Activated CD4-positive, alpha-beta T cell treated with anti-CD3 and anti-CD28 coated beads for 36 hours (primary cell): ENCODE measurements at regions of chr3 and their contacts with region 1.

Region 1: GRCh38 chr3:32238453-32239306 is at the start of gene CMTM8:
- DNase-seq: peak; percentile 84
- ATAC-seq: peak; percentile 86
- H3K4me3 Mint-ChIP-seq: peak within 1 kb of the TSS; percentile 82
- H3K27ac Mint-ChIP-seq: peak within 1 kb of the TSS; percentile 45
- H3K4me1 Mint-ChIP-seq: peaks cover 27% of the 10 kb centered on the region
- H3K27me3 Mint-ChIP-seq: peaks cover 8% of the 10 kb centered on the region
- total RNA-seq, gene CMTM8: 8.1 to 9.3 TPM

Region 2: GRCh38 chr3:32249184-32249782 is 10.6 kb after region 1 on chr3:
- CTCF ChIA-PET with region 1: interaction called, 17 read pairs
- POLR2A ChIA-PET with region 1: no interaction called
- intact Hi-C with region 1: no loop called
- DNase-seq: no peak
- ATAC-seq: no peak
- H3K4me3 Mint-ChIP-seq: no peak overlapping the region
- H3K27ac Mint-ChIP-seq: no peak overlapping the region
- H3K4me1 Mint-ChIP-seq: peaks cover 32% of the 10 kb centered on the region
- H3K27me3 Mint-ChIP-seq: no peaks in the 10 kb centered on the region

Region 3: DNA sequence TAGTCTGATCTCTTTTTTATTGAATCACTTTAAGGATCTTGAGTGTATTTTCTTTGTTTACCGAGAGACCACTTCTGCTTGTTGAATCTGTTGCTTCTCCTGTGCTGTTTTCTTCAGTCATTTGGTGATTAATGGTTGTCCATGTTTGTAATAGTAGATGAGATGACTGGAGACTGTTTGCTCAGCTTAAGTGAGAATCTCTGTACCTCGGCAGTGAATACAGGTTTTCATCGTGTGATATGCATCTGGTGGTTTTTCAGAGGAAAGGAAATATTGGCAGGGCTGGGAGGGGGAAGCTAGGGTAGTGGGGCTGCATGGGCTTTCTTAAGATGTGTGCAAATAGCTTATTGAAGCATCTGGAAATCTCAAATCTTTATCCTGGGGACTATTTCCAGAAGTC is 19.0 kb after region 1 on chr3:
- CTCF ChIA-PET with region 1: interaction called, 17 read pairs
- POLR2A ChIA-PET with region 1: no interaction called
- intact Hi-C with region 1: no loop called
- DNase-seq: no peak
- ATAC-seq: no peak
- H3K4me3 Mint-ChIP-seq: no peak overlapping the region
- H3K27ac Mint-ChIP-seq: no peak overlapping the region
- H3K4me1 Mint-ChIP-seq: peaks cover 16% of the 10 kb centered on the region
- H3K27me3 Mint-ChIP-seq: no peaks in the 10 kb centered on the region

Region 4: DNA sequence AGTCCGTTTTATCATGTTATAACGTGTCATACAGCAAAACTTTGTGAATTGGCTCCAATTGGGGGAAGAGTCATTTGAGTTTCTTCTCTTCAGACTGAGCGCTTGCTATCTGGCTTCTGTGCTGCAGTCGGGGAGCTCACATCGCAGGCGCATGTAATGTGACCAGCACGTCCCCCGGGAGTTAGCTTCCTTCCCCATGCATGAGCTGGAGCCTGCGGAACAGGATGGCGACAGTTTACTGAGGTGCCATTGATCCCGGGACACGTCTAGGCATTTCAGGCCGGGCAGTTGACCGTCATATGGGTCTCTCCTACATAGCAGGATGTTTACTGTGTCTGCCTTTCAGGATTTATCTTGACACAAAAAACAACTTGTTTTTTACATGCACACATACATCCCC is 44.6 kb after region 1 on chr3:
- CTCF ChIA-PET with region 1: interaction called, 7 read pairs
- POLR2A ChIA-PET with region 1: no interaction called
- intact Hi-C with region 1: loop called in 1 of 2 experiments (anchors 5 kb)
- DNase-seq: no peak
- ATAC-seq: no peak
- H3K4me3 Mint-ChIP-seq: no peak overlapping the region
- H3K27ac Mint-ChIP-seq: no peak overlapping the region
- H3K4me1 Mint-ChIP-seq: peaks cover 33% of the 10 kb centered on the region
- H3K27me3 Mint-ChIP-seq: no peaks in the 10 kb centered on the region

Region 5: DNA sequence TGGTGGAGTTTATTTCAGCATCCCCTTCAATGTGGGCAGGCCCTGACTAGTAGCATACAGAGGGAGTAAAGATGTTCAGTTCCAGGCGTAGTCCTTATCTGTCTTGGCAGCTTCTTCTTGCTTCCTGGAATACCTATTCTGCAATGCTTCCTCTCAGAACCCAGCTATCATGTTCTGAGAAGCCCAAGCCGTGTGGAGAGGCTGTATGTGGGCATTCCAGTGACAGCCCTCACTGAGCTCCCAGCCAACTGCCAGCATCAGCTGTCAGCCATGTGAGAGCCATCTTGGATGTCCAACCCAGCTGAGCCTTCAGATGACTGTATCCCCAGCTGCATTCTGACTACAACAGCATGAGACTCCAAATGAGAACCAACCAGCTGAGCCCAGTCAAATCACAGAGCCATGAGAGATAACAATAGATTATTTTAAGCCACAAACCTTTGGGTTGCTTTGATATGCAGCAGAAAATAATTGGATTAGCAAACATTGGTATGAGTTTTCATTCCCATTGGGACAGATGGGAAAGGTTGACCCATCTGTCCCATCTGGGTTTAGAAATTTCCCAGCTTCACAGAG is 144.5 kb after region 1 on chr3:
- CTCF ChIA-PET with region 1: no interaction called
- POLR2A ChIA-PET with region 1: no interaction called
- intact Hi-C with region 1: no loop called
- DNase-seq: no peak
- ATAC-seq: peak; percentile 33
- H3K4me3 Mint-ChIP-seq: no peak overlapping the region
- H3K27ac Mint-ChIP-seq: no peak overlapping the region
- H3K4me1 Mint-ChIP-seq: no peaks in the 10 kb centered on the region
- H3K27me3 Mint-ChIP-seq: no peaks in the 10 kb centered on the region

Region 6: GRCh38 chr3:32570421-32571191 is 331.9 kb after region 1 on chr3 and contains the start of gene DYNC1LI1:
- CTCF ChIA-PET with region 1: no interaction called
- POLR2A ChIA-PET with region 1: interaction called, 3 read pairs
- intact Hi-C with region 1: loop called in 1 of 2 experiments (anchors 5 kb)
- DNase-seq: peak; percentile 96
- ATAC-seq: peak; percentile 96
- H3K4me3 Mint-ChIP-seq: peak within 1 kb of the TSS; percentile 78
- H3K27ac Mint-ChIP-seq: peak within 1 kb of the TSS; percentile 90
- H3K4me1 Mint-ChIP-seq: peaks cover 28% of the 10 kb centered on the region
- H3K27me3 Mint-ChIP-seq: no peaks in the 10 kb centered on the region
- total RNA-seq, gene DYNC1LI1: 31.8 to 31.9 TPM